H1 (cell line): ENCODE measurements at regions of chr19 and their contacts with region 1.

Region 1: GRCh38 chr19:47210689-47211316 is 20.2 kb downstream of the BBC3 start:
- DNase-seq: peak; percentile 60 to 88
- H3K4me3 ChIP-seq: no peak overlapping the region
- H3K27ac ChIP-seq: peak overlapping the region; percentile 51; the same call in 1 of the 2 replicates
- H3K4me1 ChIP-seq: peaks cover 0 to 14% (median 5%) of the 10 kb centered on the region in 4 experiments; a peak in 5 of 7 replicates
- H3K27me3 ChIP-seq: no peaks in the 10 kb centered on the region
- CTCF ChIP-seq: peak in 2 of 3 experiments; percentile 70 to 79; a peak in 3 of 4 replicates
- EP300 ChIP-seq: no peak
- POLR2A ChIP-seq: no peak; a peak in 1 of 3 replicates
- RAD21 ChIP-seq: peak; percentile 68 to 76

Region 2: DNA sequence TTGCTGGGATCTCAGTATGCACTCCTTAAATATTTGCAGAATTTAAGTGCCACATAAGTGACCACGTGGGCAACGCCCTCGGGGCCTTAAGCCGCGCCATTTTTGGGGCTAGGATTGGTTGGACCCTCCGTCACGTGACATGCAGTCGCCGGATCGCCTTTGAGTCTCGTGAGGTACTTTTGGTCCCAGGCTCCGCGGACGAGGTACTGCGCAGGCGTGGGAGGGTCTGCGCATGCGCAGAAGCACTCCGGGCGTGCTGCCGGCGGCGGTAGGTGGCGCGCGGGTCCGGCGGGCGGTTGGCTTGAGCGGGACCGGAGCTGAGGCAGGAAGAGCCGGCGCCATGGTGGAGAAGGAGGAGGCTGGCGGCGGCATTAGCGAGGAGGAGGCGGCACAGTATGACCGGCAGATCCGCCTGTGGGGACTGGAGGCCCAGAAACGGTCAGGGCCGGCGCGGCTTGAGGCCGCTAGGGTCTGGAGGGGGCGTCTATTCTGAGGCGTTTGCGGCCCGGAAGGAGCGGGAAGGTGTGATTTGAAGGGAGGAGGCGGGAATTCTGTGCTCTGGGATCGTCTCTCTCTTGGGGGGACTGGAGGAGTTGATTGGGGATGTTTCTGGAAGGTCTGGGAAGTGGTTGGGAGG is 80.1 kb before region 1 on chr19 and contains the start of gene SAE1:
- CTCF ChIA-PET with region 1: interaction called, 6 read pairs
- POLR2A ChIA-PET with region 1: interaction called, 10 read pairs
- DNase-seq: peak; percentile 98 to 99
- H3K4me3 ChIP-seq: peak within 1 kb of the TSS; percentile 90 to 99 (median 94)
- H3K27ac ChIP-seq: peak within 1 kb of the TSS; percentile 94
- H3K4me1 ChIP-seq: peaks cover 0 to 8% (median 7%) of the 10 kb centered on the region in 4 experiments; a peak in 5 of 7 replicates
- H3K27me3 ChIP-seq: no peaks in the 10 kb centered on the region
- CTCF ChIP-seq: peak; percentile 34 to 63 (median 52); a peak in 3 of 4 replicates
- EP300 ChIP-seq: no peak
- POLR2A ChIP-seq: peak; percentile 78 to 84
- RAD21 ChIP-seq: peak; percentile 38 to 41; a peak in 2 of 4 replicates
- total RNA-seq, gene SAE1: 268 and 273 TPM in 2 replicates

Region 3: GRCh38 chr19:47168065-47168464 is 42.7 kb before region 1 on chr19:
- CTCF ChIA-PET with region 1: interaction called, 14 read pairs
- POLR2A ChIA-PET with region 1: interaction called, 5 read pairs
- DNase-seq: no peak
- H3K4me3 ChIP-seq: no peak overlapping the region
- H3K27ac ChIP-seq: no peak overlapping the region
- H3K4me1 ChIP-seq: no peaks in the 10 kb centered on the region
- H3K27me3 ChIP-seq: no peaks in the 10 kb centered on the region
- CTCF ChIP-seq: no peak
- EP300 ChIP-seq: no peak
- POLR2A ChIP-seq: no peak
- RAD21 ChIP-seq: no peak

Region 4: DNA sequence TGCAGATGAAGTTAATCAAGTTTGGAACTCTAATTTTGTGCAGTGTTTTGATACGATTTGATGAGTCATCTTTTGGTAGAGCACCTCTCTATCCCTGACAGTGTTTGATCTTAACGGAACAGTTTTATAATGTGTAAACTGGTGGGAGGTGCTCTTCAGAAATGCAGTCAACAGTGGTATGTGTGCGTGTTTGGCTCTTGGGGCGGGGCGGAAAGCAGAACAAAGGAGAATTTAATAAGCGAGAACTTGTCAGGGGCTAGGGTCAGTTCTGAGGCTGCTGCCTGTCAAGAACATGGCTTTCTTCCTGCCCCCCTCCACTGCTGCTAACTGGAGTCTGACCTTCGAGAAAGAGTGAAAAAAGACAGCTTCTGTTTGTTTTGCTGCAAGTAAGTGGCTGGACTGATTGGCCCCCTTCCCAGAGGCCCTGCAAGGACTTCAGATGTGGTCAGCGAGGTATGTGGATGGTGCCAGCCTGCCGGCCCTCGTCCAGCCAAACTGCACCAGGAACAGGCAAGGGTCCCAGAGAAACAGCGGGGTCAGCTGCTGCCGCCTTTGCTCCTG is 20.6 kb before region 1 on chr19:
- CTCF ChIA-PET with region 1: interaction called, 15 read pairs
- POLR2A ChIA-PET with region 1: interaction called, 11 read pairs
- DNase-seq: no peak
- H3K4me3 ChIP-seq: no peak overlapping the region
- H3K27ac ChIP-seq: no peak overlapping the region
- H3K4me1 ChIP-seq: no peaks in the 10 kb centered on the region
- H3K27me3 ChIP-seq: no peaks in the 10 kb centered on the region
- CTCF ChIP-seq: no peak
- EP300 ChIP-seq: no peak
- POLR2A ChIP-seq: no peak
- RAD21 ChIP-seq: no peak

Region 5: DNA sequence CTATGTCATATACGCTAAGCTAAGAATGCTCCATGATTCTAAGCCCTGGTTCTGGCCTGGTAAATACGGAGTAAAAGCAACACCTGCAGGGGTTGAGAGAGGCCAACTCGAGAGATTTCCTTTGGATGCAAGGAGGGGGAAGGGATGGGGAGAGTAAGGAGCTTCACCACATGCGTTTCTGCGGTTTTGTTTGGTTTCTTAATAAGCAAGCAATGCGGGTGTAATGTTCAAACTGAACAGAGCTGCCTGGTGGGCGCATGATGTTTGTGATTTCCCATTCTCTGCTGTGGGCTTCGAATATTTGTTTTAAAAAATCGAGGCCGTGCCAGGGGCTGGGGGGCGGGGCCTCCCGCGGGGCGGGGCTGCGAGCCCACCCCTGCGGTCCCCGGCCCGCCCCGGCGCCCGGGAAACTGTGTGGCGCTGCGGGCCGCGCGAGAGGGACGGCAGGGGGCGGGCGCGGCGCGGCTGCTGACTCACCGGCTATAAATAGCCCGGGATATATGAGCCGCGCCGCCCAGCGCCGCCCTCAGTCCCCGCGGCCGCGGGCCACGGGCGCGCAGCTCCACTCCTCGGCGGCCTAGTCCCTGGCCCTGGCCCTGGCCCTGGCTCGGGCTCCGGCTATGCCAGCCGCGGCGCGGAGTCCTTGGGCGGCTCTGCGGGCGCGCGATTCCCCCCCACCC is 15.1 kb after region 1 on chr19:
- CTCF ChIA-PET with region 1: interaction called, 152 read pairs
- POLR2A ChIA-PET with region 1: interaction called, 195 read pairs
- DNase-seq: peak in 1 of 2 experiments; percentile 91
- H3K4me3 ChIP-seq: peak overlapping the region; percentile 36 to 99 (median 72); a peak in 7 of 8 replicates
- H3K27ac ChIP-seq: peak overlapping the region; percentile 82; the same call in 1 of the 2 replicates
- H3K4me1 ChIP-seq: peaks cover 5 to 32% (median 17%) of the 10 kb centered on the region in 4 experiments
- H3K27me3 ChIP-seq: no peaks in the 10 kb centered on the region; a peak in 1 of 7 replicates
- CTCF ChIP-seq: peak in 1 of 3 experiments; percentile 39; a peak in 2 of 4 replicates
- EP300 ChIP-seq: peak in 1 of 2 experiments; percentile 71; a peak in 2 of 3 replicates
- POLR2A ChIP-seq: peak; percentile 98 to 100
- RAD21 ChIP-seq: no peak

Region 6: GRCh38 chr19:47243776-47244547 is 33.2 kb after region 1 on chr19:
- CTCF ChIA-PET with region 1: interaction called, 303 read pairs
- POLR2A ChIA-PET with region 1: interaction called, 56 read pairs
- DNase-seq: peak; percentile 91 to 99
- H3K4me3 ChIP-seq: peak overlapping the region; percentile 21 to 61 (median 34); a peak in 7 of 8 replicates
- H3K27ac ChIP-seq: peak overlapping the region; percentile 55; the same call in 1 of the 2 replicates
- H3K4me1 ChIP-seq: peaks cover 6 to 23% (median 18%) of the 10 kb centered on the region in 4 experiments
- H3K27me3 ChIP-seq: peaks cover 0 to 25% (median 23%) of the 10 kb centered on the region in 4 experiments; a peak in 6 of 7 replicates
- CTCF ChIP-seq: peak; percentile 87 to 98 (median 96)
- EP300 ChIP-seq: peak in 1 of 2 experiments; percentile 90; a peak in 2 of 3 replicates
- POLR2A ChIP-seq: no peak
- RAD21 ChIP-seq: peak; percentile 93 to 94

Region 7: GRCh38 chr19:47315125-47315821 is 104.5 kb after region 1 on chr19:
- CTCF ChIA-PET with region 1: no interaction called
- POLR2A ChIA-PET with region 1: no interaction called
- DNase-seq: no peak
- H3K4me3 ChIP-seq: no peak overlapping the region
- H3K27ac ChIP-seq: no peak overlapping the region
- H3K4me1 ChIP-seq: no peaks in the 10 kb centered on the region
- H3K27me3 ChIP-seq: no peaks in the 10 kb centered on the region
- CTCF ChIP-seq: no peak
- EP300 ChIP-seq: no peak
- POLR2A ChIP-seq: no peak
- RAD21 ChIP-seq: no peak